OCI-LY7 (cell line): ENCODE measurements at regions of chr12 and their contacts with region 1.

Region 1: DNA sequence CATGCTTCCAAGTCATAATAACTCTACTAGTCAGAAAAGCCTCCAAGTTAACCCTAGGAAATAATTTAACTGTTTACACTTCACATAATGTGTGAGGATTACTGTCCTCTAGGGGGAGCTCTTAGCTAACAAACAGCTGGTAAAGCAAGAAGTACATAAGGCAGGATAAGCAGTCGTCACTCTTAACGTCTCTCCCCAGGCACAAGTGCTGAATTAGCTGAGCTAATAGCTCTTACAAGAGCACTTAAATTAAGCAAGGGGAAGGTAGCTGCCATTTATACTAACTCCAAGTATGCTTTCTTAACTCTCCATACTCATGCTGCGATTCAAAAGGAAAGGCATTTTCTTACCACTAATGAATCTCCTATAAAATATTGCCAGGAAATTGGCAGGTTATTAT is 79.3 kb upstream of the TSPAN11 start:
- DNase-seq: peak; percentile 84
- H3K4me3 ChIP-seq: no peak overlapping the region
- H3K27ac ChIP-seq: no peak overlapping the region
- H3K4me1 ChIP-seq: peaks cover 7% of the 10 kb centered on the region
- CTCF ChIP-seq: peak; percentile 93

Region 2: GRCh38 chr12:29519585-29520182 is 1327.6 kb before region 1 on chr12:
- CTCF ChIA-PET with region 1: no interaction called
- POLR2A ChIA-PET with region 1: no interaction called
- intact Hi-C with region 1: loop called (anchors 1 kb)
- DNase-seq: peak; percentile 44
- H3K4me3 ChIP-seq: no peak overlapping the region
- H3K27ac ChIP-seq: no peak overlapping the region
- H3K4me1 ChIP-seq: no peaks in the 10 kb centered on the region
- CTCF ChIP-seq: peak; percentile 89

Region 3: DNA sequence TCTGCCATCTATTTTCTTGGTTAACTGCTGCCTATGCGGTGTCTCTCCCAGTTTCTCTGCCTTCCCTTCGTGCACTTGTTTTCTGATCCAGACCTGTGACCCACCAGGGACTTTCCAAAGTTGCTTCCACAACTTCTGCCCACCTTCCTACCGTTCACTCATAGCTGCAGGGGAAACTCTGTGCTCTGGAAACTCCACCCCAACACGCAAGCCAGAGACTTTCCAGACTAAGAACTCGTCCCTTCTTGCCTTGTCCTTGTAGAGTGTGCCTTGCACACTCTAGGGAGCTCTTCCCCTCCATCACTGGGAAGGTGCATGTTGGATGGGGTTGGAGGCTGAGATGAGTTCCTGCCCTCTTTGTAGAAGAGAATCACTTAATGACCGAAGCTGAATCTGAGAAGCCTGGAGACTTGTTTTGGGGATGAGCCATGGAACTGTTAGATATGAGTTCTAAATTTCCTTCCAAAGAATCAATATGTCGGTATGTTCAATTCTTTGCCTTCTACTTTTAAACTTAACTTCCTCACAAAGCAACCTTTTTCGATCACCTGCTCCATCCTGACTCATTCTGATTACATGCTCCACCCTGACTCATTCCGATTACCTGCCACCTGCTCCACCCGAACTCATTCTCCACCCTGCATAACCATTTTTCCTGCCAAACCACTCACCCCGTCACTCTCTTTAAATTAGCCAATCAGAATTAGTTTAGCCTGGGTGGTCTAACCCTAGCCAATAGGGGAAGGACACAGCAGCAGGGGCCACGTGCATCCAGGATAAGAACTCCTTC is 10.4 kb before region 1 on chr12:
- CTCF ChIA-PET with region 1: no interaction called
- POLR2A ChIA-PET with region 1: no interaction called
- intact Hi-C with region 1: no loop called
- DNase-seq: no peak
- H3K4me3 ChIP-seq: no peak overlapping the region
- H3K27ac ChIP-seq: no peak overlapping the region
- H3K4me1 ChIP-seq: no peaks in the 10 kb centered on the region
- CTCF ChIP-seq: no peak

Region 4: GRCh38 chr12:30896461-30896860 is 49.2 kb after region 1 on chr12:
- CTCF ChIA-PET with region 1: no interaction called
- POLR2A ChIA-PET with region 1: no interaction called
- intact Hi-C with region 1: no loop called
- DNase-seq: no peak
- H3K4me3 ChIP-seq: no peak overlapping the region
- H3K27ac ChIP-seq: no peak overlapping the region
- H3K4me1 ChIP-seq: no peaks in the 10 kb centered on the region
- CTCF ChIP-seq: no peak

Region 5: DNA sequence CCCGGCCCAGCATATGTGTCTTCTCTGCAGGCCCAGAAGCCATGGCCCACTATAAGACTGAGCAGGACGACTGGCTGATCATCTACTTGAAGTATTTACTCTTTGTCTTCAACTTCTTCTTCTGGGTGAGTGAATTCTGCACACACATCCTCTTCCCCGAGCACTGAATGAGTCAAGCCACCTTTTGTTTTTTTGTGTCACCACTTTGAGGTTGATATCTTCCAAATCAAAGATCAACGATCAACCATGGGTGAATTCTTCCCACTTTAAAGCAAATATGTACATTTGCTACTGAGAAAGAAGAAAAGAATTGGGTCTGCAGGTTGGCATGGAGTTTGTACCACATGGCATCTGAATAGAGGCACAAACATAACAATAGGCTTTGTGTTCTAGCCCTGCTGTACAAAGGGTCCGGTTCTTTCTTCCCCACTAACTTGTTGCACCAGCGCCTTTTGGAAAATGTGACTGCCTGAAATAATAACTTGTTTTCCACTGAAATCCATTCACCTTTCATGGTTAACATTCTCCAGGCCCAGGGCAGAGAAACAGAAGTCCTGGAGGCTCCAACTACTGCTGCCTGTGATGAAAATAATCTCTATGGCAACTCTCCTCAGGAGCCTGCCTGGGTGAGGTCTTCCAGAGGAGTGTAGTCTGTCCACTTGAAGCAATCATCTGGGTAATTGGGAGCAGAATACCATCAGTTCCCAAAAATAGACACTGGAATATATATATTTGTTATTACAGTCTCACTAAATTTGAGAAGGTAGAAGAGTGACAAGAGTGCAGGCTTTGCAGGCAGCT is 106.9 kb after region 1 on chr12:
- CTCF ChIA-PET with region 1: no interaction called
- POLR2A ChIA-PET with region 1: no interaction called
- intact Hi-C with region 1: no loop called
- DNase-seq: no peak
- H3K4me3 ChIP-seq: no peak overlapping the region
- H3K27ac ChIP-seq: no peak overlapping the region
- H3K4me1 ChIP-seq: no peaks in the 10 kb centered on the region
- CTCF ChIP-seq: no peak

Region 6: DNA sequence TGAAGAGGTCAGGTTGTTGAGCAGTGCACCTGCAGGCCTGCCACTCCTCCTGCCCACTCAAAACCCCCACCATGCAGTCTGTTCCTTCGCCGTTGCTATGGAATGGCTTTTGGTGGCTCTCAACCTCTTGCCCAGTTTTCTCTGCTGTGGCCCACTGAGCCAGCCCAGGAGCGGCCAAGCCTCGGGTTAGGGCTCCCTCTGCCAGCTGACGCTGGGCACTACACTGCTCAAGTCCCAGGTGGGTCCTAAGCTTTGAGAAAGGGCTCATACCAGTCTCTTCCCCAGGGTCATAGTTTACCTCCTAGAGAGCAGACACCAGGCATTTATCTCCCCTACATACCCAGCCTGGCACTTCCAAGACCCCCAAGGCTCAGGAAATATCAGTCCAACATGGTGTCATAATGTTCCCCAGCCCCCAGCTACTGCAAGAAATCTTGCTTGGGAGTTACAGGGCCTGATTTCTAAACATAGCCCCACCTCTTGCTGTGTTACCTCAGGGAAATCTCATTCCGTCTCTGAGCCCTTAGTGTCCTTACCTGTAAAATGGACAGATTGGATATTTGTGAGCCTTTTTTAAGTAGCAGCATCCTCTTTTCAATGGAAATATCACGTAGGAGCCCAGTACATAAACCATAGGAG is 138.7 kb after region 1 on chr12:
- CTCF ChIA-PET with region 1: interaction called, 3 read pairs
- POLR2A ChIA-PET with region 1: interaction called, 3 read pairs
- intact Hi-C with region 1: loop called (anchors 1 kb)
- DNase-seq: peak; percentile 66
- H3K4me3 ChIP-seq: no peak overlapping the region
- H3K27ac ChIP-seq: no peak overlapping the region
- H3K4me1 ChIP-seq: peaks cover 10% of the 10 kb centered on the region
- CTCF ChIP-seq: peak; percentile 83

Region 7: DNA sequence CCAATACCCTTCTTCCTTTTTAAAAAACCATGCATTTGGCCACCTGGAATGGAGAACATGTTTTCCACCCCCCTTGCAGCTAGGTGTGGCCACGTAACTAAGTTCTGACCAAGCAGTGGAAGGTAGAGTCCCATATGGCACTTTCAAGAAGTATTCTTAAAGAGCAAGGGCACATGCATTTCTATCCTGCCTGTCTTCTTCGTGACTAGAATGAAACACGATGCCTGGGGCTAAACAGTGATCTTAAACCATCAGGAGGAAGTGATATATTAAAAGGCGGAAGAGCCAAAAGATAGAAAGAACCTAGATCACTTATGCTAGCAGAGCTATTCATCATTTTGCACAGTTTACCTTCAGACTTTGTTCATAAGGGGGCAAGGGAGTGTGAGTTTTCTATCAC is 210.4 kb after region 1 on chr12:
- CTCF ChIA-PET with region 1: no interaction called
- POLR2A ChIA-PET with region 1: no interaction called
- intact Hi-C with region 1: loop called (anchors 5 kb)
- DNase-seq: peak; percentile 24
- H3K4me3 ChIP-seq: no peak overlapping the region
- H3K27ac ChIP-seq: no peak overlapping the region
- H3K4me1 ChIP-seq: peaks cover 33% of the 10 kb centered on the region
- CTCF ChIP-seq: no peak

Region 8: DNA sequence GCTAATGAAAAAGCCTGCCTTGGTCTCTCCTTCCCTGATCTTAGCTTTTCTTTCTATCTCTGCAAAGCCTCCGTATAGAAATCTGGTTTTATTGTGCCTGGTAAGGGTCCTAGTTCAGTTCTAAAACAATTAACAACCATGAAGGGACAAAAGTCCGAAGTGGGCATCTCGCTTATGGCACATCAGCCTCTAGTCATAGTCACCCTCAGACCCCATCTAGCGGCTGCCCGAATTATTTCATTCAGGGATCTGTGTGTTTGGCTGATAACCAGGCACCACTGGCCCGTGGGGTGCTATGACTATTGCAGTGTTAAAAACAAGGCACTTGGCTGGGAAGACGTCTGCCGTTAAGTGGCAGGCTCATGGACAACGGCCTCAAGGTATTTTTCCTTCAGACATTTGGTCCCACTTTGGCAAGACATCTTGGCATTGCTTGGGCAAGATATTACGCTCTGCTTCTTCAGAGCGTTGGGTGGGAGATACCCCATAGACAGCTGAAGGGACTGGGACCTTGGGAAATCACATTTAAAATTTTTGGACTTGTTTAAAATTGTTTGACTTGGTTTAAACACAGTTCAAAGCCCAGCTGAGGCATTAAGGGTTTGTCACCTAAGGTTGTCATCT is 391.6 kb after region 1 on chr12:
- CTCF ChIA-PET with region 1: no interaction called
- POLR2A ChIA-PET with region 1: no interaction called
- intact Hi-C with region 1: loop called (anchors 2 kb)
- DNase-seq: peak; percentile 73
- H3K4me3 ChIP-seq: no peak overlapping the region
- H3K27ac ChIP-seq: no peak overlapping the region
- H3K4me1 ChIP-seq: no peaks in the 10 kb centered on the region
- CTCF ChIP-seq: peak; percentile 88